ENCODE measurements at regions of chr18 and their contacts with region 1.

Region 1: DNA sequence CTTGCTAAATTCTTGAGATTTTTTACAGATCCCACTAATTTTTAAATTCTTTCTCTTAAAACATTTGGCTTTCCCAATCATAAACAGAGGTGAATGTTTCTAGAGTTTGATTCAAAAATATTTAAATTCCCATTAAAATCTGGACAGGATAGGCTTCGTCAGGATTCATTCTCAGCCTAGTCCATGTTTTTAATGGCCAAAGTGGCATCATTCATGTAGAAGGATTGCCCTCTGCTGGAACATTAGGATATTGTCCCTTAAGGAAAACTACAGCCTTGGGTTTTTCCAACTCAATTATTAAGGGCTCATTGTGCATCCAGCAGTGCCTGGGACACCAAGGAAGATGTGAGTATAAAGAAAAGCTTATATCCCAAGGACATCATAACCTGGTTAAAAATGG is 71.7 kb downstream of the TPGS2 start:
- DNase-seq: no peak
- H3K4me3 ChIP-seq: no peak overlapping the region
- H3K27ac ChIP-seq: peak overlapping the region; percentile 22 to 40
- H3K4me1 ChIP-seq: peaks cover 0 to 23% (median 7%) of the 10 kb centered on the region in 4 donors
- H3K27me3 ChIP-seq: no peaks in the 10 kb centered on the region
- CTCF ChIP-seq: peak; percentile 72 to 76

Region 2: GRCh38 chr18:36693931-36694620 is 63.0 kb before region 1 on chr18:
- intact Hi-C with region 1: loop called (anchors 10 kb)
- DNase-seq: no peak
- H3K4me3 ChIP-seq: no peak overlapping the region
- H3K27ac ChIP-seq: no peak overlapping the region
- H3K4me1 ChIP-seq: no peaks in the 10 kb centered on the region
- H3K27me3 ChIP-seq: no peaks in the 10 kb centered on the region
- CTCF ChIP-seq: no peak

Region 3: DNA sequence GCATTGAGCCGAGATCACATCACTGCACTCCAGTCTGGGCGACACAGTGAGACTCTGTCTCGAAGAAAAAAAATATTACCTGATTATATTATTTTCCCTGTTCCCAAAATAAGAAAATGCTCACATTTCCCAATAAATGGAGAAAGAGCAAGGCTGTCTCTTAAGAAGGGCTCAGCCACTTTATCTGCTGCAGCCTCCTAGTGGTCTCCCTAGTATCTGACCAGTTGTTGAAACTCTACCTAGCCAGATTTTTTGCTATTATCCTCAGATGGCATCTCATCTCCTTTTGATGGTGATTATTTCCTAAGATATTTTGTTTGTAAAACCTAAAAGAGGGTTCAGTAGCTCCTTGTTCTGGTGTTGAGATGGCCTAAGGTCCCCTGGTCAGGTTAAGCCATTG is 42.6 kb before region 1 on chr18:
- intact Hi-C with region 1: no loop called
- DNase-seq: no peak
- H3K4me3 ChIP-seq: no peak overlapping the region
- H3K27ac ChIP-seq: no peak overlapping the region
- H3K4me1 ChIP-seq: peaks cover 0 to 12% (median 0%) of the 10 kb centered on the region in 4 donors
- H3K27me3 ChIP-seq: no peaks in the 10 kb centered on the region
- CTCF ChIP-seq: no peak

Region 4: DNA sequence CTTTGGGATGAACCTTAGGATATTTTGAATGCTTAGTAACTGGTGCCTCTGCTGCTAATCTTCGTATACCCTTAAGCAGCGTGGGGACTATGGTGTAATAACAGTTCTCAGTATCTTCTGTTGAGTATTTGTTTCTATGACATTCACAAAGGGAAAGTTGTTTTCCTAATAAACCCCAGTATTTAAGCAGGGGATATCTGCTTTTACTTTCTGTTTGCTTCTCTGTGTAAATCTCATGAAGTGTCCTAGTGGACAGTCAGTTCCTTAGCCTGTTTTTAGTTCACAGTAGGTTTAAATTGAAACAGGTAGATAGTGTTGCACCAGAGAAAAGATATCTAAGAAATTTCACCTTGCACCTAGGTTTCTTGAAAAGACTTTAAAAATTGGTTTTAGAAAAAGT is 86.7 kb after region 1 on chr18:
- intact Hi-C with region 1: no loop called
- DNase-seq: no peak
- H3K4me3 ChIP-seq: no peak overlapping the region
- H3K27ac ChIP-seq: no peak overlapping the region
- H3K4me1 ChIP-seq: no peaks in the 10 kb centered on the region
- H3K27me3 ChIP-seq: no peaks in the 10 kb centered on the region
- CTCF ChIP-seq: no peak